ENCODE measurements at regions of chr20 and their contacts with region 1.

Region 1: DNA sequence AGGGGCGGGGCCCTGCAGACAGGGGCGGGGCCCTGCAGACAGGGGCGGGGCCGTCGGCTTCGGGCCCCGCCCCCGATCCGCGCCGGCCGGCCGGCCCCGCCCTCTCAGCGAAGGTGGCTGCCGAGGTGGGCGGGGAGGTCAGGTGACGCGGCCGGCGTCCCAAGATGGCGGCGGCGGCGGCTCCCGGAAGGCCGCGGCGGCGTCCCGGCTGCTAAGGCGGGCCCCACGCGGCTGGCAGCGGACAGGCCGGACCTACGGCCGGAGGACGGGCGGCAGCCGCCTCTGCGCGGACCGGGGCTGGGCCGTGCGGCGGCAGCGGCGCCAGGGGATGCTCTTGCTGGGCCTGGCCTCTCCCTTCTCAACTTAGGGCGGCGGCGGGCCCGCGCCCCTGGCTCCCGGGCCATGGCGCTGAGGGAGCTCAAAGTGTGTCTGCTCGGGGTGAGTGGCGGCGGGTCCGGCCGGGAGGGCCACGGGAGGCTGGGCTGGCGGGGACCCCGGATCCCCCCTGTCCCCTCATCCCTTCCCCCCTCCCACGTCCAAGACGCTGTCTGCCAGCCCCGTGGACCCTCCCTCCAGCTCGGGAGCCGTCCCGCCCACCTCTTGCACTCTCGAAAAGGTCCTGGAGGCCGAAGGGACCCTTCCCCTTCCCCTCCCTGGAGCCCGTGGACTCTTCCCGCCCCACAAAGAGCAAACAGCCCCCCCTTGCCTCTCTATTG is at the start of gene RAB22A:
- DNase-seq: peak; percentile 84
- ATAC-seq: peak; percentile 50
- H3K4me3 Mint-ChIP-seq: peak within 1 kb of the TSS; percentile 91
- H3K27ac Mint-ChIP-seq: peak within 1 kb of the TSS; percentile 93
- H3K4me1 Mint-ChIP-seq: peaks cover 60% of the 10 kb centered on the region
- H3K27me3 Mint-ChIP-seq: no peaks in the 10 kb centered on the region
- CTCF ChIP-seq: no peak
- total RNA-seq, gene RAB22A: 8.3 to 9.0 TPM

Region 2: DNA sequence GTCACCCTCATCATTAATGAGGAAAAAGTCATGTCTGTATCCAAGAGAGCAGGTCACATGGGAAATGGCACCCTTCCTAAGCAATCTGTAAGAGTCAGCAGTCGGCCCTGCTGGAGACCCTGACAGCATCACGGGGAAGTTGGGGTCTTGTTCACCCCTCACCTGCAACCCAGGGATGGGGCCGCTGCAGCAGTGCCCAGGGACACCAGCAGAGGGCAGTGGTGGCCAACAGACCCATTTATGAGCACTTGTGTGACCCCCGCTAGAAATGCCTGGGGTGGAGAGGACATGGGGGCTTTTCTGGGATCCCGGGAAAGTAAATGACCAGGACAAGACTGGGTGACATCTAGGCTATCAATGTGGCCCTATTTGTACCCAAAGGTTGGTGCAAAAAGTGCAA is 117.2 kb before region 1 on chr20:
- CTCF ChIA-PET with region 1: no interaction called
- POLR2A ChIA-PET with region 1: no interaction called
- intact Hi-C with region 1: no loop called
- DNase-seq: peak; percentile 58
- ATAC-seq: peak; percentile 60
- H3K4me3 Mint-ChIP-seq: no peak overlapping the region
- H3K27ac Mint-ChIP-seq: no peak overlapping the region
- H3K4me1 Mint-ChIP-seq: no peaks in the 10 kb centered on the region
- H3K27me3 Mint-ChIP-seq: peaks cover 14% of the 10 kb centered on the region
- CTCF ChIP-seq: peak; percentile 77

Region 3: GRCh38 chr20:58256842-58257241 is 52.9 kb before region 1 on chr20:
- CTCF ChIA-PET with region 1: no interaction called
- POLR2A ChIA-PET with region 1: no interaction called
- intact Hi-C with region 1: no loop called
- DNase-seq: no peak
- ATAC-seq: no peak
- H3K4me3 Mint-ChIP-seq: no peak overlapping the region
- H3K27ac Mint-ChIP-seq: peak overlapping the region; percentile 47
- H3K4me1 Mint-ChIP-seq: peaks cover 32% of the 10 kb centered on the region
- H3K27me3 Mint-ChIP-seq: no peaks in the 10 kb centered on the region
- CTCF ChIP-seq: no peak

Region 4: DNA sequence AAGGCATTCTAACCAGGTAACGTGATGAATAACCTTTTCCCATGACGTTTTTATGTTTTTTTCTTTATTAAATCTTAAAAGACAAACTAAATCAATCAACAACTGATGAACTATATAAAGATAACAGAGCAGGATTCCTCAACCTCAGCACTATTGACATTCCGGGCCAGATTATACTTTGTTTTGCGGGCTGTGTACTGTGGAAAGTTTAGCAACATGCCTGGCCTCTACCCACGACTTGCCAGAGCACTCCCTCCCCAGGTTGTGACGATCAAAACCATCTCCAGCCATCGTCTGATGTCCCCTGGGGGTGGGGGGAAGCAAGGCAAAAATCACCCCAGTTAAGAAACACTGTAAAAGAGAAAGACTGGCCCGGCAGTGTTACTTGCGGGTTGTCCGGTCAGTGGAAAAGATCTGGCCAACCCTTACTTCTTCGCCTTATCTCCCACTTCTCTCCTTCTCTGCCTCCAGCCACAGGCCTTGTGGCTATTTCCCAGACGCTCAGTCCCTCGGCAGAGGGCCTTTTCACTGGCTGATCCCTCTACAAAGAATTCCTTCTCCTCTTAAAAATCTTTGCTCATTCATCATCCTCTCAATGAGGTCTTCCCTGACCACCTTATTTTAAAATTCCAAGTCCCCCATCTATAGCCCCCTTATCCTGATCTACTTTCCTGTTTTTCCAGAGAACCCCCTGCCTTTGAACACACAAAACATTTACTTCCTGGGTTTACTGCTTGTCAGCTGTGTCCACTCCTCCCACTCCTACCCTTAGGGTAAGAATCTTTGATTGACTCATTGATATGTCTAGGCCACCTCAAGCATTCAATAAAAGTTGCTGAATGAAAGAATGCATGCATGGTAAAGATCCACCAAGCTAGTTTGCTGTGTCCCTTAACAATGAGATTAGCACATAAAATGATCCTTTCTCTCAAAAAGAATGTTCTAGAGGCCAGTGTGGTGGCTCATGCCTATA is 15.0 kb before region 1 on chr20:
- CTCF ChIA-PET with region 1: interaction called, 3 read pairs
- POLR2A ChIA-PET with region 1: interaction called, 14 read pairs
- intact Hi-C with region 1: no loop called
- DNase-seq: no peak
- ATAC-seq: no peak
- H3K4me3 Mint-ChIP-seq: no peak overlapping the region
- H3K27ac Mint-ChIP-seq: no peak overlapping the region
- H3K4me1 Mint-ChIP-seq: peaks cover 11% of the 10 kb centered on the region
- H3K27me3 Mint-ChIP-seq: no peaks in the 10 kb centered on the region
- CTCF ChIP-seq: no peak

Region 5: DNA sequence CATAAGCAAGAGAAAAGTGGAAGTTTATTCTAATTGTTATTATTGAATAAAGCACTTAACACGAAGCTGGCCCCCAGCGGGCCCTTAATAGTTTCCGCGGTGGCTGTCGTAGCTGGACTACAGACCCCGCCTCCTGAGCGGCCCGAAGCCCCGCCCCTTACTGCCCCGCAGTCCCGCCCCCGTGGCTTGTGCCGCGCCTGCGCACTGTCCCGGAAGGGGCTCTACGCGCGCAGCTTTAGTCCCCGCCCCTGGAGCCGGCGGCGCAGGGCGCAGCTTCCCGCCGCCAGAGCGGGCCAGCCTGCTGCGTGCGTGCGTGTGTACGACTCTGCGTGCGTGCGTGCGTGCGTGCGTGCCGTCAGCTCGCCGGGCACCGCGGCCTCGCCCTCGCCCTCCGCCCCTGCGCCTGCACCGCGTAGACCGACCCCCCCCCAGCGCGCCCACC is 79.2 kb after region 1 on chr20 and contains the start of gene VAPB:
- CTCF ChIA-PET with region 1: interaction called, 5 read pairs
- POLR2A ChIA-PET with region 1: interaction called, 9 read pairs
- intact Hi-C with region 1: loop called (anchors 5 kb)
- DNase-seq: peak; percentile 95
- ATAC-seq: peak; percentile 98
- H3K4me3 Mint-ChIP-seq: peak within 1 kb of the TSS; percentile 94
- H3K27ac Mint-ChIP-seq: peak within 1 kb of the TSS; percentile 97
- H3K4me1 Mint-ChIP-seq: peaks cover 32% of the 10 kb centered on the region
- H3K27me3 Mint-ChIP-seq: peaks cover 2% of the 10 kb centered on the region
- CTCF ChIP-seq: no peak
- total RNA-seq, gene VAPB: 46.3 to 46.8 TPM

Region 6: DNA sequence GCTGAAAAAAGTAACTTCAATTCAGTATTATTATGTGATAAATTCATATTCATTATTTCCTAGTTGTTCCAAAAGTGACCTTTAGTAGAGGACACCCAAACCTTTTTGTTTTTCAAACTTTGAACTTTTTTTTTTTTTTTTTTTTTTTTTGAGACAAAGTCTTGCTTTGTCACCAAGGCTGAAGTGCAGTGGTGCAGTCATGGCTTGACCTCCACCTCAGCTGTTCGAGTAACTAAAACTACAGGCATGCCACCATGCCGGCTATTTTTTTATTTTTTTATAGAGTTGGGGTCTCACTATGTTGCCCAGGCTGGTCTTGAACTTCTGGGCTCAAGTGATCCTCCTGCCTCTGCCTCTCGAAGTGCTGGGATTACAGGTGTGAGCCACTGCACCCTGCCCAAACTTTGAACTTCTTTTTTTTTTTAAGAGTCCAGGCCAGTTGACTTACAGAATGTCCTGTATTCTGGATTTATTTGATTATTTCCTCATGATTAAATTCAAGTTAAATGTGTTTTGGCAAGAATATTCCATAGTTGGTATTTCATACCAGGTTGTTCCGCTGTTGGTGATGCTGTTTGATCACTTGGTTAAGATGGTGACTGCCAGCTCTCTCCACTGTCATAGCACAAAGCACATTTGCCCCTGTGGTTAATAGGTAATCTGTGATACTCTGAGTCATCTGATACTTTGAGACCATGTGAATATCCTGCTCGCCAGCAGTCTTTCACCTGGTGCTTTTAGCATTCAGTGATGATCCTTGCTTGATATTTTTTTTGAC is 127.3 kb after region 1 on chr20:
- CTCF ChIA-PET with region 1: no interaction called
- POLR2A ChIA-PET with region 1: no interaction called
- intact Hi-C with region 1: no loop called
- DNase-seq: peak; percentile 13
- ATAC-seq: peak; percentile 74
- H3K4me3 Mint-ChIP-seq: no peak overlapping the region
- H3K27ac Mint-ChIP-seq: no peak overlapping the region
- H3K4me1 Mint-ChIP-seq: peaks cover 59% of the 10 kb centered on the region
- H3K27me3 Mint-ChIP-seq: no peaks in the 10 kb centered on the region
- CTCF ChIP-seq: no peak

Measured in activated CD8-positive, alpha-beta T cell treated with anti-CD3 and anti-CD28 coated beads for 36 hours (primary cell).